ENCODE measurements at regions of chr12 and their contacts with region 1.

Region 1: DNA sequence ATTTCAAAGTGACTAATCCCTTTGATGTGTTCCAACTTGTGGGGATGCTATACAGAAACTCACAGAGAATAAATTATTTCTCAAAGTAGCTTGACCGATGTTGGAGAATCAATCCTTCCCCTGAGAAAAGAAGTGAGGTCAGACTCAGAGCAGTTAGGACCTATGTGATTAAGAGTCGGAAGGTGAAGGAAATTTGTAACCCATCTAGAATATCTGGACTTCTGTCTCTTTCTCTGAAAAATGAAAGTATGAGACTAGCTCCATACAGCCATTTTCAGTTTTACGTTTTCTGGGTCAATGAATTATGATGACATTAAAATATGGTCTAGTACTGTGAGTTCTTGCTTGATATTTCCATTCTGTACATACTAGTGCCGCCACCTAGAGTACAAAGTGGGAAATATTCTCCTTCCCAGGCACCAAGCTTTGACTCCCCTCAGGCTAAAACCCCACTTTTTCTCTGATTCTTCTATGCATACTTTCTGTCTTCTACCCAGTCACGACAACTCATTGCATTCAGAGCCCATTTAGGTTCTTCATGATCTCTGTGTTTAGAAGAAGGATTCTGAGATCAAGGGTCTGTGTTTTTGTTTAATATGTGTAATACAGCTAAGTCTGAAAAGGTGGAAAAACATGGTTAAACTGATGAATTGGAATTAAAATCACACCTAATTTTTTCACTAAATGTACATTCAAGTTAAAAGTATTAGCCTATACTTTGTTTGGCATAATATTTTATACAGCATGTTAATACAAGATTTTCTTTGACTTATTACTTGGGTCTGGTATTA is 6.9 kb upstream of the NTS start:
- DNase-seq: peak; percentile 82
- H3K4me3 ChIP-seq: no peak overlapping the region
- H3K27ac ChIP-seq: no peak overlapping the region
- H3K4me1 ChIP-seq: no peaks in the 10 kb centered on the region
- H3K27me3 ChIP-seq: no peaks in the 10 kb centered on the region
- CTCF ChIP-seq: peak; percentile 85

Region 2: DNA sequence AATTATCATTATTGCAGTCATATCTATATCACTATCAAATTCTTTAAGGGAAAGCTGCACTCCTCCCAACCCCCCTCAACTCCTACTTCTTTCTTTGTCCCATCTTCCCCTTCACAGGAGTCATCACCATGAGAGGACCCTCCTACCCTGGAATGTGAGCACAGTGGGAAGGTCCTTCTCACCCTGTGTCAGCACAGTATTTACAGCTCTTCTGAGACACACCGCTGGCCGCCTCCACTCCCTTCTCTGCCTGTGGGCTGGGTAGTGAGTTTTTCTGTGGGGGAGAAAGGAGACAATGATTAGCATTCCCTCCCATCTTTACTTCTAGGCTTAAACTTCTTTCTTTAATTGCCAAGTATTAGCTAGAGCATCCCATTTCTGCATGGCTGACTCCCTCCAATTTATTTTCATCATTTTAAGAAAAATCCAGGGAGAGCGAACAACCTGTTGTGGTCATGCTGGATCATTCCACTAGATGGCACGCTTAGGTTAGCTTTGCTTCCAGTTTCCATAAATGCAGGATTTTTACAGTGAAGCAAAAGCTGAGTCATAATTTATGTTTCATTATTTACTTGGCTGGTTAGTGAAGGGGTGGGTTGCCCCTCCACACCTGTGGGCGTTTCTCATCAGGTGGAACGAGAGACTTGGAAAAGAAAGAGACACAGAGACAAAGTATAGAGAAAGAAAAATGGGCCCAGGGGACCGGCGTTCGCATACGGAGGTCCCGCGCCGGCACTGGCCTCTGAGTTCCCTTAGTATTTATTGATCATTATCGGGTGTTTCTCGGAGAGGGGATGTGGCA is 398.6 kb before region 1 on chr12:
- CTCF ChIA-PET with region 1: interaction called, 6 read pairs
- POLR2A ChIA-PET with region 1: no interaction called
- intact Hi-C with region 1: loop called (anchors 2 kb)
- DNase-seq: peak; percentile 83
- H3K4me3 ChIP-seq: no peak overlapping the region
- H3K27ac ChIP-seq: peak overlapping the region; percentile 6
- H3K4me1 ChIP-seq: peaks cover 44% of the 10 kb centered on the region
- H3K27me3 ChIP-seq: no peaks in the 10 kb centered on the region
- CTCF ChIP-seq: peak; percentile 83

Region 3: DNA sequence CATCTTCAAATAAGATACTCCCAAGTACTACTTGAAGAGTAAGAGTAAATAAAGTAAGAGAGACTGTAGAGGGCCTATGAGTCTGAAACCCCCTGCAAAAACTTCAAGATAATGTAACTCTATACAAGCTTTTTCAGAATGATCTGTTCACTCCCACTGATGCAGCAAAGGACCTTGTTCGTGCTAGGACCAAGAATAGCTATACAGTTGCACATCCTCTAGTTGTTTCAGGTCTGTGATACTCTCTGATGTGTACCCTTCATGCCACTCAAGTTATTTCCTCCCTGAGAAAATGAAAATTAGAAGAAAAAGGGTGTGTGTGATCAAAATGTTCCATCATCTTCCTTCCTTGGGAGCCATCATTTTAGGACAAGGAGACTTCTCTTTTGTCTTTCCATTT is 382.8 kb before region 1 on chr12:
- CTCF ChIA-PET with region 1: interaction called, 3 read pairs
- POLR2A ChIA-PET with region 1: no interaction called
- intact Hi-C with region 1: loop called (anchors 5 kb)
- DNase-seq: no peak
- H3K4me3 ChIP-seq: no peak overlapping the region
- H3K27ac ChIP-seq: no peak overlapping the region
- H3K4me1 ChIP-seq: no peaks in the 10 kb centered on the region
- H3K27me3 ChIP-seq: no peaks in the 10 kb centered on the region
- CTCF ChIP-seq: no peak

Region 4: DNA sequence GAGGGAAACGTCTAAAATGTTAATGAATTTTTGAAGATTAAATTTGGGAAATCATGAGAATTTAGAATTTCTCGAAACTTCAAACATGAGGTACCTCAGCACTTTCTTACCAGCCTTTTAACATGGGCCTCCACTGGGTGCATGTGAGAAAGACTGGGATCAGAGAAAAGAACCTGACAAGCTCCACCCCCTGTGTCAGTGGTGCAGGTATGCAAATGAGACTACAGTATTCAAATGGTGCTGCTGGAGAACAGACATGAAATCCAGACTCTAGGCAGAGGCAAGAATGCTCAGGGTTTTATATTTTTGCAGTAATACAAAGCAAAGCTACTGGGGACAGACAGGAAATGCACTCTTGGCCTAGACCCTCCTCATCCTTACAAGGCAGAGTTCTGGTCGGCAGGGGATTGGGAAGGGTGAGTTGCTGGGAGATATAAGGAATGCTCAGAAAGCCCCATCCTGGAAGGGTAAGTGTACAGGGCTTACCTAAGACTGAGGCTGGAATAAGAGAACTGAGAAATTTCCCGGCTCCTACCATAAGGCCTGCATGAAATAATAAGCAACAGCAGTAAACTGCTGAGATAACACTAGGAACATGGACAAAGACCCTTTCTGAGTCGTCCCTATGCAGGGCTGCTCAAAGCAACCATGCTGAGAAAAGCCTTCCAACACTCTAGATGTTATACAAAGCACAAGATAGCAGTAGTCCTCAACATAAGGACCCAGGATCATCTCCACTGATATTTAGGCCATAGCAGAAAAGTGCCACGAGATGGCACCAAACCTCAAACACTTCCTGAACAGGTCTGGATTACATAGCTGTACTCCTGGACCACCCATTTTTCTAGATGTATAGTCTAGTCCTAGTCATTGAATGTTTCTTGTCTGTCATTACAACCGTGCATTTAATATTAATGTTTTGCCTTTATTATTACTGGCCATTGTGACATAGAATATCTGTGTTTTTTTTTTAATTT is 291.8 kb before region 1 on chr12:
- CTCF ChIA-PET with region 1: interaction called, 27 read pairs
- POLR2A ChIA-PET with region 1: no interaction called
- intact Hi-C with region 1: loop called (anchors 1 kb)
- DNase-seq: peak; percentile 86
- H3K4me3 ChIP-seq: no peak overlapping the region
- H3K27ac ChIP-seq: no peak overlapping the region
- H3K4me1 ChIP-seq: peaks cover 2% of the 10 kb centered on the region
- H3K27me3 ChIP-seq: no peaks in the 10 kb centered on the region
- CTCF ChIP-seq: peak; percentile 83